ENCODE measurements at regions of chr5 and their contacts with region 1.

Region 1: GRCh38 chr5:141260458-141261237 is 15.5 kb downstream of the PCDHB15 start:
- DNase-seq: no peak
- H3K4me3 ChIP-seq: no peak overlapping the region
- H3K27ac ChIP-seq: no peak overlapping the region
- H3K4me1 ChIP-seq: no peaks in the 10 kb centered on the region
- H3K27me3 ChIP-seq: no peaks in the 10 kb centered on the region
- CTCF ChIP-seq: no peak
- POLR2A ChIP-seq: no peak

Region 2: GRCh38 chr5:141313711-141314110 is 53.1 kb after region 1 on chr5:
- intact Hi-C with region 1: loop called in 1 of 2 experiments (anchors 5 kb)
- DNase-seq: no peak
- H3K4me3 ChIP-seq: no peak overlapping the region
- H3K27ac ChIP-seq: no peak overlapping the region
- H3K4me1 ChIP-seq: no peaks in the 10 kb centered on the region
- H3K27me3 ChIP-seq: no peaks in the 10 kb centered on the region
- CTCF ChIP-seq: no peak
- POLR2A ChIP-seq: no peak

Measured in adrenal gland (tissue), 19 donors.